HCT116 (cell line): ENCODE measurements at regions of chr6 and their contacts with region 1.

Region 1: GRCh38 chr6:130885392-130886192 is 58.4 kb downstream of the SMLR1 start:
- DNase-seq: peak; percentile 80
- ATAC-seq: peak; percentile 95
- H3K4me3 ChIP-seq: no peak overlapping the region
- H3K27ac ChIP-seq: no peak overlapping the region
- H3K4me1 ChIP-seq: no peaks in the 10 kb centered on the region
- H3K27me3 ChIP-seq: no peaks in the 10 kb centered on the region
- CTCF ChIP-seq: peak; percentile 74 to 90 (median 84)
- POLR2A ChIP-seq: no peak
- RAD21 ChIP-seq: peak; percentile 96

Region 2: GRCh38 chr6:131116749-131117360 is 231.3 kb after region 1 on chr6:
- CTCF ChIA-PET with region 1: interaction called, 123 read pairs
- POLR2A ChIA-PET with region 1: interaction called, 8 read pairs
- RAD21 ChIA-PET with region 1: interaction called, 4 to 12 read pairs
- intact Hi-C with region 1: loop called (anchors 1 kb)
- DNase-seq: peak; percentile 41
- ATAC-seq: peak; percentile 70; the same call in 1 of the 2 replicates
- H3K4me3 ChIP-seq: no peak overlapping the region
- H3K27ac ChIP-seq: no peak overlapping the region
- H3K4me1 ChIP-seq: no peaks in the 10 kb centered on the region
- H3K27me3 ChIP-seq: no peaks in the 10 kb centered on the region
- CTCF ChIP-seq: peak; percentile 41 to 78 (median 67); a peak in 5 of 6 replicates
- POLR2A ChIP-seq: no peak
- RAD21 ChIP-seq: peak; percentile 87

Region 3: GRCh38 chr6:131519670-131520436 is 634.3 kb after region 1 on chr6:
- CTCF ChIA-PET with region 1: interaction called, 11 read pairs
- POLR2A ChIA-PET with region 1: no interaction called
- RAD21 ChIA-PET with region 1: no interaction called
- intact Hi-C with region 1: loop called (anchors 5 kb)
- DNase-seq: peak; percentile 40
- ATAC-seq: peak; percentile 99
- H3K4me3 ChIP-seq: no peak overlapping the region
- H3K27ac ChIP-seq: no peak overlapping the region
- H3K4me1 ChIP-seq: no peaks in the 10 kb centered on the region
- H3K27me3 ChIP-seq: no peaks in the 10 kb centered on the region
- CTCF ChIP-seq: peak; percentile 42 to 62 (median 57); a peak in 5 of 6 replicates
- POLR2A ChIP-seq: no peak
- RAD21 ChIP-seq: peak; percentile 60

Region 4: GRCh38 chr6:131532580-131533039 is 647.0 kb after region 1 on chr6:
- CTCF ChIA-PET with region 1: interaction called, 20 read pairs
- POLR2A ChIA-PET with region 1: no interaction called
- RAD21 ChIA-PET with region 1: interaction called in 1 of 2 experiments, 3 read pairs
- intact Hi-C with region 1: loop called (anchors 1 kb)
- DNase-seq: no peak
- ATAC-seq: no peak
- H3K4me3 ChIP-seq: no peak overlapping the region
- H3K27ac ChIP-seq: no peak overlapping the region
- H3K4me1 ChIP-seq: no peaks in the 10 kb centered on the region
- H3K27me3 ChIP-seq: no peaks in the 10 kb centered on the region
- CTCF ChIP-seq: no peak
- POLR2A ChIP-seq: no peak
- RAD21 ChIP-seq: no peak

Region 5: DNA sequence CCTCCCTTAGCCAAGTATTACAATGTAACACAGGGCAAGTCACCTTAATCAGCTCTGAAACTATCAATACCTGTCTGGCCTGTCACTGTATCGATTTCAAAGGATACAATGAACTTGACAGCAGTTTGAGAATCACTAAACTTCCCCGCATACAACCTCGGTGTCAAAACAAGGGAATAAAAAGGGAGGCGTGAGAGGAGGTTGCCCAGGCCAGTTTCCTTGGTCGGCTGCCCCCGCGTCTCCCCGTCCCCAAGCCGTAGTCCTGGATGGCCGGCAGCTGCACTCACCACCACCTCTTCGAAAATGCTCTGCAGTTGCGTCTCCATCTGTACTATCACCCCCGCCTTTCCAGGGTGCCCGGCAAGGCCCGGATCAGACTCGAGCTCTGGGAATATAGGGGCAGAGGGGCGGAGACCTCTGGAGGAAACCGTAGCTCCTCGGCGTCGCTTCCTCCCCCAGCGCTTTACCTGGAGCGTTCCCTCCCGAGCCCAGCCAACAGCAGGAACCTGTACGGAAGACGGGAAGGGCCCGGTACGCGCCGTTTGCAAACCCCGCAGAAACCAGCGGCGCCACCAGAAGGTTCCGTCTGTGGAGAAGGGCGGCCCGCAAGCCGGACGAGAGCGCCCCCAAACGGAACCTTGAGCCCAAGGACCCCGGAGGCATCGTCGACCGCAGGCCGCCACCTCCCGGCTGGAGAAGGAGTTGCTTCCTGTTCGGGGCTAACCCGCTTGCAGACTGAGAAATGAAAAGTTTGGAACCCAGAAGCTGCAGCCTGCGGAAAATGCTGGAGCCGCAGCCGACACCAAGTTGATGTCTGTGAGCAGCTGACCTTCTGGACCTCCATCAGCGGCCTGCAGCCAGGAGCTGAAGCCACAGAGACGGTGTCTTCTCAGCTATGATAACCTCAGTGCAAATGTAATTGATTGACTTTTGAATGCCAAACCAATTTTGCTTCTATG is 742.4 kb after region 1 on chr6 and contains the start of gene MED23:
- CTCF ChIA-PET with region 1: interaction called, 8 read pairs
- POLR2A ChIA-PET with region 1: no interaction called
- RAD21 ChIA-PET with region 1: no interaction called
- intact Hi-C with region 1: loop called (anchors 1 kb)
- DNase-seq: peak; percentile 92
- ATAC-seq: peak; percentile 96
- H3K4me3 ChIP-seq: peak within 1 kb of the TSS; percentile 77 to 94
- H3K27ac ChIP-seq: peak within 1 kb of the TSS; percentile 73
- H3K4me1 ChIP-seq: peaks cover 5 to 15% of the 10 kb centered on the region in 2 experiments
- H3K27me3 ChIP-seq: no peaks in the 10 kb centered on the region
- CTCF ChIP-seq: peak; percentile 98 to 100 (median 98)
- POLR2A ChIP-seq: no peak
- RAD21 ChIP-seq: peak; percentile 86
- total RNA-seq, gene MED23: 17.2 TPM